Keratinocyte (primary cell): ENCODE measurements at regions of chr1 and their contacts with region 1.

Region 1: GRCh38 chr1:186155594-186155993 is 219.5 kb downstream of the TPR start:
- DNase-seq: peak; percentile 71
- H3K4me3 ChIP-seq: no peak overlapping the region
- H3K27ac ChIP-seq: no peak overlapping the region
- H3K4me1 ChIP-seq: peaks cover 14% of the 10 kb centered on the region
- H3K27me3 ChIP-seq: no peaks in the 10 kb centered on the region
- CTCF ChIP-seq: peak in 2 of 3 experiments; percentile 45 to 72

Region 2: GRCh38 chr1:185813401-185813979 is 342.1 kb before region 1 on chr1:
- dilution Hi-C with region 1: loop called (anchors 25 kb)
- DNase-seq: peak; percentile 7
- H3K4me3 ChIP-seq: no peak overlapping the region
- H3K27ac ChIP-seq: no peak overlapping the region
- H3K4me1 ChIP-seq: no peaks in the 10 kb centered on the region
- H3K27me3 ChIP-seq: no peaks in the 10 kb centered on the region
- CTCF ChIP-seq: peak in 2 of 3 experiments; percentile 44 to 51

Region 3: DNA sequence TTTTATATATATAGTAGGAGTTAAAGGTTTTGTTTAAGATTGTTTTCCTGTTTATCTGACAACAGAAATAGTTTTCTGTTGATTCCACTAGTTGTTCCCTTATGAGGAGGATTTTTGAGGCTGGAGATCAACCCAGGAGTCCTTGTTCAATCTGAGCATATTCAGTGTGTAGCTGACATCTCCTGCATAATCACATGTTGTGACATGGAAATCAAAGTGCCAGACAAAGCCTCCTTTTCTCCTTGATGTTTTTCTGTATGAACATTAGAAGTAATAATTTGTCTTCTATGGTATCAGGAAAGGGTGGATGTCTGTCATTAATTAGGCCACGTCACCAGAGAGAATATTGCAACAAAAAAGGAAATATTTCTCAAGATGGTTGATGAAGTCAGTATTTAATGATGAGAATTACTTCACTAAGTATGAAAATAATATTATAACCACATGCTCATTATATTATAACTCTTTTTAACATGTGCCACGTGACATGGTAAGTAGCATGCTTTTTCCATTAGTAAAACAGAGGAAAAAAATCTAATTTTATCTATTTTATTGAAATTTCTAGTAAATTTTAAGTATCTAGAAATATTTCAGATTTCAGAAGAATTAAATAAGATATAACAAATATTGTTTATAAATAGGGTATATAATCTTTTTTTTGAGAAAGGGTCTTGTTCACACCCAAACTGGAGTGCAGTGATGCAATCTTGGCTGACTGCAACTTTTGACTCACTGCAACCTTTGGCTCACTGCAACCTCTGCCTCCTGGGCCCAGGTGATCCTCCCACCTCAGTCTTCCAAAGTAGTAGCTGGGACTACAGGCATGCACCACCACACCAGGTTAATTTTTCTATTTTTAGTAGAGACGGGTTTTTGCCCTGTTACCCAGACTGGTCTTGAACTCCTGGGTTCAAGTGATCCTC is 197.9 kb before region 1 on chr1:
- dilution Hi-C with region 1: no loop called
- DNase-seq: no peak
- H3K4me3 ChIP-seq: no peak overlapping the region
- H3K27ac ChIP-seq: no peak overlapping the region
- H3K4me1 ChIP-seq: peaks cover 6% of the 10 kb centered on the region
- H3K27me3 ChIP-seq: no peaks in the 10 kb centered on the region
- CTCF ChIP-seq: no peak